Activated CD8-positive, alpha-beta T cell treated with anti-CD3 and anti-CD28 coated beads for 36 hours (primary cell): ENCODE measurements at regions of chr17 and their contacts with region 1.

Region 1: DNA sequence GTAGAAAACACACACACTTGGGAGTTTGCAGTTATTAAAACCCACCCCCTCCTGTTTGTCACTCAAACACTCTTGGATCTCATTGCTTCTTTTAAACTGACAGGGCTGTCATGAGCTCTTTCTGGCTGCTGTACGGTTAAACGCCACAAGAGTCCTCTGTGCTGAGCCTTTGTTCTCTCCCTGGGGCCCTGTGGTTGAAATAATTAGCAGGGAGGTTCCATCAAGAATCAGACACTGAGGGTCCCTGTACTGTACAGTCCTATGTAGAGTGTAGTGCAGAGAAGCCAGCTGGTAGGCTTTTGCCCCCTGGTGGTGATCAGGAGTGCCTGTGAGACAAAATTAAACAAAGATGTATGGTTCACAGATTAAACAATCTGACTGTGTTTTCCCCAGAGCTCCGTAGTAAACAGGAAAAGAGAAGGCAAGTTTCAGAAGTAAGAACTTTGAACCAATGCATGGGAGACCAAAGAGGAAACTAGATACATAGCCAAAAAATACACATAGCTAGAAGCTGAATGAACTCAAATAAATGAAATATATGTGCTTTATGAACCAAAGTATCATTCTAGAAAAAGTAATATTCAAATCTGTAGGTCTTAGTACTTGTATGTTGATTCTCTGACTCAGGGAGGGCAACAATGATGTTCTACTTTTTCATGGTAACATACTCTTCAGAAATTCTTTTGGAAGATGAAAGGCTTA is 1.4 kb upstream of the SSH2 start:
- DNase-seq: peak; percentile 85
- ATAC-seq: peak; percentile 79
- H3K4me3 Mint-ChIP-seq: no peak overlapping the region
- H3K27ac Mint-ChIP-seq: no peak overlapping the region
- H3K4me1 Mint-ChIP-seq: peaks cover 22% of the 10 kb centered on the region
- H3K27me3 Mint-ChIP-seq: no peaks in the 10 kb centered on the region
- CTCF ChIP-seq: peak; percentile 79

Region 2: GRCh38 chr17:29622337-29623282 is 308.8 kb before region 1 on chr17 and contains the start of gene CORO6:
- CTCF ChIA-PET with region 1: interaction called, 32 read pairs
- POLR2A ChIA-PET with region 1: interaction called, 3 read pairs
- intact Hi-C with region 1: no loop called
- DNase-seq: peak; percentile 77
- ATAC-seq: peak; percentile 67
- H3K4me3 Mint-ChIP-seq: peak within 1 kb of the TSS; percentile 77
- H3K27ac Mint-ChIP-seq: peak within 1 kb of the TSS; percentile 71
- H3K4me1 Mint-ChIP-seq: peaks cover 44% of the 10 kb centered on the region
- H3K27me3 Mint-ChIP-seq: no peaks in the 10 kb centered on the region
- CTCF ChIP-seq: no peak
- total RNA-seq, gene CORO6: 11.6 to 13.0 TPM

Region 3: DNA sequence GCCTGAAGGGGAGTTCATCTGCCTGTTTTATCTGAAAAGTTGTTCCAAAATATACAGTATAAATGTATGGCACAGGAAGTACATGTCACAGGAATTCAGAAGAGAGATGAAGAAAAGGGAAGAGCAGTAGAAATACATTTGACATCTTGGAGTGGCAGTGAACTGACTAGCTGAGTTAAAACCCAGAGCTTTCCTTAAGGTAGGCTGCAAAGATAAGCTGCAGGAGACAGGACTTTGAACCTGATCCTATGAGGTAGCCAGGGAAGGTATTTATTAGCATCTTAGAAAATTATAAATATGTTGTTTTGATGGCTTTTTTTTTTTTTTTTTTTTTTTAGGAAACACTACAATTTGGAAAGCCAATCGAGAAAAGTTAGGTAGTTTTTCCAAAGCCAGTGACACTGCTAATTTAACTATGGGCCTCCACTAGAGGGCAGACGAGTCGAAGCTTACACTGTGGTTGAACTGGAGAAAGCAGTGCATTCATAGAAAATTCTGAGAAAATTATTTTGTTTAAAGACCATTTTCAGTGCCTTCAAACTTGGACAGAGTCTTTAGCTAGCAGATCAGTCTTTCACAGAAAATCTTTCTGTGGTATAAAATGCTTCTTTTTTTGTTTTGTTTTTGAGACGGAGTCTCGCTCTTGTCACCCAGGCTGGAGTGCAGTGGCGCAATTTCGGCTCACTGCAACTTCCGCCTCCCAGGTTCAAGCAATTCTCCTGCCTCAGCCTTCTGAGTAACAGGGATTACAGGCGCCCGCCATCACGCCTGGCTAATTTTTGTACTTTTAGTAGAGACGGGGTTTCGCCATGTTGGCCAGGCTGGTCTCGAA is 123.6 kb before region 1 on chr17:
- CTCF ChIA-PET with region 1: interaction called, 309 read pairs
- POLR2A ChIA-PET with region 1: interaction called, 13 read pairs
- intact Hi-C with region 1: loop called (anchors 1 kb)
- DNase-seq: peak; percentile 81
- ATAC-seq: peak; percentile 77
- H3K4me3 Mint-ChIP-seq: no peak overlapping the region
- H3K27ac Mint-ChIP-seq: no peak overlapping the region
- H3K4me1 Mint-ChIP-seq: peaks cover 14% of the 10 kb centered on the region
- H3K27me3 Mint-ChIP-seq: no peaks in the 10 kb centered on the region
- CTCF ChIP-seq: peak; percentile 90

Region 4: GRCh38 chr17:29828676-29829284 is 102.6 kb before region 1 on chr17:
- CTCF ChIA-PET with region 1: interaction called, 18 read pairs
- POLR2A ChIA-PET with region 1: no interaction called
- intact Hi-C with region 1: no loop called
- DNase-seq: no peak
- ATAC-seq: no peak
- H3K4me3 Mint-ChIP-seq: no peak overlapping the region
- H3K27ac Mint-ChIP-seq: no peak overlapping the region
- H3K4me1 Mint-ChIP-seq: peaks cover 35% of the 10 kb centered on the region
- H3K27me3 Mint-ChIP-seq: no peaks in the 10 kb centered on the region
- CTCF ChIP-seq: no peak

Region 5: DNA sequence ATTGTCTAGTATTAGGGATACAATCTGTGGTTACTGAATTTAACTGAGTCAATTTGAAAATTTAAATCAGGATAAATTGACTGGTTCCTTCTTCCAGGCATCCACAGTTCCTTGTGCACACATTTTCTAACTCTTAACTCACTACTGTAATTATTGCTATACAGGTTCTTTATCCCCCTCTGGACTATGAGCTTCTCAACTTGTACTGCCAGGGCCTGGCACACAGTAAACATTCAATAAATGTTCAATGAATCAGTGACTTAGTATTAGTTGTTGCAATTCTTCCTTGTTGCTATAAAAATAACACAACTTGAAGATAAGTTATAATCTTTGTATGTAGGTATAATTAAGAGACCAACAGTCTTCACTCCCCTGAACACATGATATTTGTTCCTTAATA is 69.3 kb before region 1 on chr17:
- CTCF ChIA-PET with region 1: interaction called, 24 read pairs
- POLR2A ChIA-PET with region 1: no interaction called
- intact Hi-C with region 1: loop called (anchors 10 kb)
- DNase-seq: no peak
- ATAC-seq: no peak
- H3K4me3 Mint-ChIP-seq: no peak overlapping the region
- H3K27ac Mint-ChIP-seq: no peak overlapping the region
- H3K4me1 Mint-ChIP-seq: peaks cover under 1% of the 10 kb centered on the region
- H3K27me3 Mint-ChIP-seq: no peaks in the 10 kb centered on the region
- CTCF ChIP-seq: no peak

Region 6: DNA sequence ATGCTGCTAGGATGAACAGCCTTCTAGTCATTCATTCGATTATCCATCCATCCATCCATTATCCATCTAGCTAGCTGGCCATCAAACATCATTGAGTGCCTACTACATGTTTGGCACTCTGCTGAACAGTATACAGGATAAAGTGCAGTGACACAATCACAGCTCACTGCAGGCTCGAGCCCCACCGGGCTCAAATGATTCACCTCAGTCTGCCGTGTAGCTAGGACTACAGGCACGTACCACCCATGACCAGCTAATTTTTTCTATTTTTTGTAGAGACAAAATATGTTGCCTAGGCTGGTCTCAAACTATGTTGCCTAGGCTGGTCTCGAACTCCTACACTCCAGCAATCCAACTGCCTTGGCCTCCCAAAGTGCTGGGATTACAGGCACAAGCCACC is 51.4 kb before region 1 on chr17:
- CTCF ChIA-PET with region 1: no interaction called
- POLR2A ChIA-PET with region 1: no interaction called
- intact Hi-C with region 1: no loop called
- DNase-seq: no peak
- ATAC-seq: no peak
- H3K4me3 Mint-ChIP-seq: no peak overlapping the region
- H3K27ac Mint-ChIP-seq: no peak overlapping the region
- H3K4me1 Mint-ChIP-seq: peaks cover 23% of the 10 kb centered on the region
- H3K27me3 Mint-ChIP-seq: no peaks in the 10 kb centered on the region
- CTCF ChIP-seq: no peak

Region 7: DNA sequence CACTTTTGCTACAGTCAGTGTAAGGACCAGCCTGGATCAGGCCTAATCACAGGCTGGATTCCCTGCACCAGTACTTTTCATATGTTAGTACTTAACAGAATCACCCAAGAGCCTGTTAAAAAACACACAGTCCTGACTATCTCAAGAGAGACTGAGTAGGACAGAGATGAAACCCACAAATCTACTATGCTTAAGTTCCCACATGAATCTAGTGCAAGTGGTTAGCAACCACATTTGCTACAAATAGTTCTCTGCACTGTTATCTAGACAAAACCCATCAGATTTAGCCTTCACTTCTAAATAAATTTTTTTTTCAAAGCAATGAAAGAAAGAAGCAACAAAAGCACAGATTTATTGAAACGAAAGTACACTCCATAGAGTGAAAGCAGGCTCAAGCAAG is 40.3 kb before region 1 on chr17:
- CTCF ChIA-PET with region 1: interaction called, 18 read pairs
- POLR2A ChIA-PET with region 1: no interaction called
- intact Hi-C with region 1: no loop called
- DNase-seq: no peak
- ATAC-seq: no peak
- H3K4me3 Mint-ChIP-seq: no peak overlapping the region
- H3K27ac Mint-ChIP-seq: no peak overlapping the region
- H3K4me1 Mint-ChIP-seq: peaks cover 14% of the 10 kb centered on the region
- H3K27me3 Mint-ChIP-seq: no peaks in the 10 kb centered on the region
- CTCF ChIP-seq: no peak

Region 8: GRCh38 chr17:29918922-29919856 is 12.2 kb before region 1 on chr17:
- CTCF ChIA-PET with region 1: interaction called, 61 read pairs
- POLR2A ChIA-PET with region 1: interaction called, 5 read pairs
- intact Hi-C with region 1: no loop called
- DNase-seq: no peak
- ATAC-seq: no peak
- H3K4me3 Mint-ChIP-seq: no peak overlapping the region
- H3K27ac Mint-ChIP-seq: no peak overlapping the region
- H3K4me1 Mint-ChIP-seq: peaks cover 35% of the 10 kb centered on the region
- H3K27me3 Mint-ChIP-seq: no peaks in the 10 kb centered on the region
- CTCF ChIP-seq: no peak

Region 9: DNA sequence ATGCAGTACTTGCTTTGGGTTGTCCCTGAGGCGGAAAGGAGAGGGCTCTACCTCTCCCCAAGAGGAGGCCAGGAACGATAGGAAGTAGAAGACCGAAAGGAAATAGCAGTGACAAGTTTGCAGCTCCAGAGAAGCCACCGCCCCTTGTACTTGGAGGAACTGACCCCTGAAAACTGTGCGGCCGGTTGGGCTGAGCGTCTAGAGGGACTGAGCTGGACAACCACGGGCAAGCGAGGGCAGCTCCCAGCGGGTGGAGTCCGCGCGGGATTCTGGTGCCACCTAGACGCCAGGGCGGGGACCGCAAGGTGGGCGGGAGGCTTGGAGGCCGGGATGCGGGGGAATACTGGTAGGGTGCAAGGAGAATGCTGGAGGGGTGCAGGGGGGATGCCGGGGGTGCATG is 305.4 kb after region 1 on chr17:
- CTCF ChIA-PET with region 1: no interaction called
- POLR2A ChIA-PET with region 1: no interaction called
- intact Hi-C with region 1: no loop called
- DNase-seq: peak; percentile 29
- ATAC-seq: no peak
- H3K4me3 Mint-ChIP-seq: no peak overlapping the region
- H3K27ac Mint-ChIP-seq: no peak overlapping the region
- H3K4me1 Mint-ChIP-seq: peaks cover 21% of the 10 kb centered on the region
- H3K27me3 Mint-ChIP-seq: peaks cover 57% of the 10 kb centered on the region
- CTCF ChIP-seq: no peak